MCF 10A (cell line): ENCODE measurements at regions of chr18 and their contacts with region 1.

Region 1: DNA sequence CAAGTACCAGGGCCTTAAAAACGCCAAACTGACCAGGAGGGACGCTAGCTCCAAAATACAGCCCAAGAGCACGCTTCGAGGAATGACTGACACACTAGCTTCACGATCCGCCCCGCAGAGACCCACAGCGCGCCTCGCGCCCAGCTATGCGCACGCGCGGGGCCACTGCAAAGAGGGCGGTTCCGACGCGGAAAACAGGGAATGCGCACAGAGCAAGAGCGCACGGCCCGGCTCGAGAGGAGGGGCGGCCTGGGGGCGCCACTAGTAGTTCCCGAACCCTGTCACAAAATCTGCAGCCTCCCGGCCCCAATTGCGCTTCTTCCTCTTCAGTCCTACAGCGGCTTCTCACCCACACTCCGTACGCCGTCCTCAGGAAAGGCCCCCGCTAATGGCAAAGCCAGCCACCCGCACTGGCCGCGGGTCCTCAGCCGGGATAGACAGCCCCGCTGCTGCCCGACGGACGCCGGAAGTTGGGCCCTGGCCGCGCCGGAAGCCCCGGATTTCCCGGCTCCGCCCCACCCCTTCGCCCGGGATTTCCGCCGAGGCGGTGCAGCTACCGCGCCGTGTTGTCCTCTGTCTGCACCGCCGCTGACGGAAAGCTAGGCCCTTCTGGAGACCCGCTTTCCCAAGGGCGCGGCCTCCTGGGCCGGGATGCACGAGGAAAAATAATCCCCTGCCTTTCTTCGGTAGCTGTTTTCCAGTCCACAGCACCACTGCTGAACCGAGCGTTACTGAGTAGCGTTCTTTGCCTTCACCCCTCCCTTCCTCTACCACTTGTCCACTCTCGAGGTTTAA is at the start of gene HDHD2:
- DNase-seq: peak; percentile 76
- H3K4me3 Mint-ChIP-seq: peak within 1 kb of the TSS; percentile 96
- H3K27ac Mint-ChIP-seq: peak within 1 kb of the TSS; percentile 98
- H3K4me1 Mint-ChIP-seq: peaks cover 33% of the 10 kb centered on the region
- H3K27me3 Mint-ChIP-seq: no peaks in the 10 kb centered on the region
- CTCF ChIP-seq: no peak
- total RNA-seq, gene HDHD2: 32.6 and 48.0 TPM in 2 replicates

Region 2: GRCh38 chr18:47113796-47114540 is 36.3 kb before region 1 on chr18:
- CTCF ChIA-PET with region 1: interaction called, 3 read pairs
- POLR2A ChIA-PET with region 1: interaction called, 11 read pairs
- intact Hi-C with region 1: no loop called
- DNase-seq: no peak
- H3K4me3 Mint-ChIP-seq: no peak overlapping the region
- H3K27ac Mint-ChIP-seq: no peak overlapping the region
- H3K4me1 Mint-ChIP-seq: peaks cover 5% of the 10 kb centered on the region
- H3K27me3 Mint-ChIP-seq: no peaks in the 10 kb centered on the region
- CTCF ChIP-seq: no peak

Region 3: DNA sequence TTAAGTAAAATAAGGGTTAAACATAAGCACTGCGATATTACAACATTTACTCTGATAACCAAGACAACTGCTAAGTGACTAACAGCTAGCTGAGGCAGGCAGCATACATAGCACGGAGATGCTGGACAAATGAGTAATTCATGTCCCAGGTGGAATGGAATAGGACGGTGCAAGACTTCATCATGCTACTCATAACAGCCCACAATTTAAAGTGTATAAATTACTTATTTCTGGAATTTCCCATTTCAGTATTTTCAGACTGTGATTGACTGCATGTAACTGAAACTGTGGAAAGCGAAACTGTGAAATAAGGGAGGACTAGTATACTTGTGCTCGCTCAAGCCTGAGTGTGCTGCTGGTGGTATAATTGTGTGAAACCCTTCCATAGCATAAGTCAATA is 13.0 kb after region 1 on chr18:
- CTCF ChIA-PET with region 1: interaction called, 5 read pairs
- POLR2A ChIA-PET with region 1: interaction called, 61 read pairs
- intact Hi-C with region 1: no loop called
- DNase-seq: peak; percentile 72
- H3K4me3 Mint-ChIP-seq: no peak overlapping the region
- H3K27ac Mint-ChIP-seq: no peak overlapping the region
- H3K4me1 Mint-ChIP-seq: peaks cover 4% of the 10 kb centered on the region
- H3K27me3 Mint-ChIP-seq: no peaks in the 10 kb centered on the region
- CTCF ChIP-seq: no peak

Region 4: DNA sequence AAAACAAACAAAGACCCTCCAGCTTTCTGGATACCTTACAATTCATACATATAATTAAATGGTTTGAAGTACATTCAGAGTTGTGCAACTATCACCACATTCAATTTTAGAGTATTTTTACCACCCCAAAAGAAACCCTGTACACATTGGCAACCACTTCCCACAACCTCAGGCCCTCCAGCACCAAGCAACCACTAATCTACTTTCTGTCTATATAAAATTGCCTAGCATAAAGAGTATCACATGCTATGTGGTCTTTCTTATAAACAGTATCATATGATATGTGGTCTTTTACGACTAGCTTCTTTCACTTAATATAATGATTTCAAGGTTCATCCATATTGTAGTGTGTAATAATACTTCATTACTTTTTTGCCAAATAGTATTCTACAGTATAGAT is 18.7 kb after region 1 on chr18:
- CTCF ChIA-PET with region 1: interaction called, 8 read pairs
- POLR2A ChIA-PET with region 1: interaction called, 61 read pairs
- intact Hi-C with region 1: no loop called
- DNase-seq: no peak
- H3K4me3 Mint-ChIP-seq: no peak overlapping the region
- H3K27ac Mint-ChIP-seq: no peak overlapping the region
- H3K4me1 Mint-ChIP-seq: no peaks in the 10 kb centered on the region
- H3K27me3 Mint-ChIP-seq: no peaks in the 10 kb centered on the region
- CTCF ChIP-seq: no peak

Region 5: DNA sequence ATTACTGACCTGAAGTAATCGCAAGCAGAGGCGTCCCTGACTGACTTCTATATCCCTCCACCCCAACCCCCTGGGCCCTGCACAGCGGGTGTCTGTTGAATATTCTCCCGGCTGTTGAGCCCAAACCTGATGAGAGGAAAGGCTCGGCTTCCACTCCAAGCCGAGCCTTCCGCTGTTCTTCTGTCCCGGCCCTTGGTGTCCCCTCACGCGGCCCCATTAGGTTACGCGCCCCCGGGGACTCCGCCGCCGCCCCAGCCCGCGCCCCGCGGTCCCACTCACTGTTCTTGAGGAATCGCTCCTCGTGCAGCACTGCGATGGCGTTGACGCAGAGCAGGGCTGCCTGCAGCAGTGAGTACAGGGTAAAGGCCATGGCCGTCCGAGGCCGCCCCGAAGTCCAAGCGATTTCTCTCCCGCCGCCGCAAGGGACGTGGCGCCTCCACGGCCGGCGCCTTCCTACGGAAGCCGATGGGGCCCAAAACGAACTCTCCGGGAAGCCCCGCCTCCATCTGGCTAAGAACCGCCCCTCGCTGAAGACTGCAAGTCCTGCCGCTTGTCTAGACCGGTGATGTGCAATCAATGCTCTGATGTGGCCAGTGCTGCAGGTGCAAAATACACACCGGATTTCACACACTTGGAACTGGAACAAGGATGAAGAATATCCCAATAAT is 25.8 kb after region 1 on chr18 and contains the start of gene IER3IP1:
- CTCF ChIA-PET with region 1: interaction called, 8 read pairs
- POLR2A ChIA-PET with region 1: interaction called, 32 read pairs
- intact Hi-C with region 1: no loop called
- DNase-seq: peak; percentile 89
- H3K4me3 Mint-ChIP-seq: no peak within 1 kb of the TSS
- H3K27ac Mint-ChIP-seq: no peak within 1 kb of the TSS
- H3K4me1 Mint-ChIP-seq: no peaks in the 10 kb centered on the region
- H3K27me3 Mint-ChIP-seq: no peaks in the 10 kb centered on the region
- CTCF ChIP-seq: no peak
- total RNA-seq, gene IER3IP1: 14.1 and 14.5 TPM in 2 replicates

Region 6: DNA sequence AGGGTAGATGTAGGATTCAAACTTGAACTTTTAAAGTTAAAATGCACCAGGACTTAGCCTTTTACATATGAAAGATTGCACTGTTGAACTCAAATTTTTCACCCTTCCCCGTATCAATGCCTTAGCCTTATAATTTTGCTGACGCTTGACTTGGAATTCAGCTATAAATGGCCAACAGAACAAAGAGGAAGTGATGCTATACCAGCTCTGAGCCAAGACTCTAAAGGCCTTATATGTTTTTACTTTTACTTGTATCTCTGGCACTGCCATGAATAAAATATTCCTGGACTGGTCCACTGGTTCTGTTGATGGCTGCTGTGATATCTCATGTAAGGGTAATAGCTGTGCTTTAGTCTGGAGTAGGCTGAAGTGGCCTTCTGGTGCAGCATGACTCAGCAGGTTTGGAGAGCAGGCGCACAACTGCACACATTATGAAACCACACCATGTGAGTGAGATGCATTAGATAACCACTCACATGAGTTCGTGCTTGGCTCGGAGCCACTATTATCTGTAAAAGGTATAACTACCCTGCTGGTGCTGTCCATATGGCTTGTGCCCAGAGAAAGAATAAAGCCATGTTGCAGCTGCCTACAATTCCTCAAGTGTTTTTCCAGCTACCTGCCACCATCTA is 34.3 kb after region 1 on chr18:
- CTCF ChIA-PET with region 1: no interaction called
- POLR2A ChIA-PET with region 1: interaction called, 11 read pairs
- intact Hi-C with region 1: no loop called
- DNase-seq: peak; percentile 78
- H3K4me3 Mint-ChIP-seq: no peak overlapping the region
- H3K27ac Mint-ChIP-seq: peak overlapping the region; percentile 69
- H3K4me1 Mint-ChIP-seq: peaks cover 6% of the 10 kb centered on the region
- H3K27me3 Mint-ChIP-seq: peaks cover 18% of the 10 kb centered on the region
- CTCF ChIP-seq: no peak

Region 7: GRCh38 chr18:47323158-47323557 is 172.9 kb after region 1 on chr18:
- CTCF ChIA-PET with region 1: no interaction called
- POLR2A ChIA-PET with region 1: no interaction called
- intact Hi-C with region 1: no loop called
- DNase-seq: peak; percentile 55
- H3K4me3 Mint-ChIP-seq: no peak overlapping the region
- H3K27ac Mint-ChIP-seq: no peak overlapping the region
- H3K4me1 Mint-ChIP-seq: no peaks in the 10 kb centered on the region
- H3K27me3 Mint-ChIP-seq: peaks cover 20% of the 10 kb centered on the region
- CTCF ChIP-seq: no peak

Region 8: GRCh38 chr18:47420130-47420529 is 269.9 kb after region 1 on chr18:
- CTCF ChIA-PET with region 1: no interaction called
- POLR2A ChIA-PET with region 1: no interaction called
- intact Hi-C with region 1: no loop called
- DNase-seq: no peak
- H3K4me3 Mint-ChIP-seq: no peak overlapping the region
- H3K27ac Mint-ChIP-seq: no peak overlapping the region
- H3K4me1 Mint-ChIP-seq: no peaks in the 10 kb centered on the region
- H3K27me3 Mint-ChIP-seq: peaks cover 54% of the 10 kb centered on the region
- CTCF ChIP-seq: no peak